GM10248 (cell line): ENCODE measurements at regions of chr4 and their contacts with region 1.

Region 1: GRCh38 chr4:26105815-26106699 is 192.0 kb downstream of the SMIM20 start:
- DNase-seq: no peak
- CTCF ChIP-seq: no peak

Region 2: DNA sequence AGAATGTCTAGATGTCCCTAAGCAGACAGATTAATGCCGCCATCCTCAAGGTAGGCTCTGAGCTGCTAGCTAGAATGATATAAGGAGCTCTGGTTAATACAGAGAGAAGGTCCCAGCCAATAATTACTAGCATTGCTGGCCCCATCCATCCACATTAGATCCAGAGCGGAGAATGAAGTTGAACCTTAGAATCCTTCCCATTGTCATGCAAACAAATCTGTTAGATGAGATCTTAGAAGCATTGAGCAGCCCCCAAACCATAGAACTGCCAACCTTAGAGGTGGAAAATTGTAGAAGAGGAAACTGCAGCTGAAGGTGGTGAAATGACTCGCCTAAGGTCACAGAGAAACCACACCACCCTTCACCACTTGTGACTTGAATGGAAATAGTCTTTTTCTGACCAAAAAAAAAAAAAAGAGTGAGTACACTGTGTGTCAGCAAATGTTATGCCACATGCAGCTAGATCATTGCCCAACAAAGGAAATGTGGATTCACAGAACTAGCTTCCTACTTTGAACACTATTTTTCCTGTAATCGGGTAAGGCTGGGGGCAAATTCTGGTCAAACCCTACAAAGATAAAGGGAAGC is 30.0 kb before region 1 on chr4:
- CTCF ChIA-PET with region 1: interaction called, 7 read pairs
- POLR2A ChIA-PET with region 1: interaction called, 11 read pairs
- DNase-seq: peak; percentile 50
- CTCF ChIP-seq: no peak

Region 3: GRCh38 chr4:26093551-26093950 is 12.5 kb before region 1 on chr4:
- CTCF ChIA-PET with region 1: interaction called, 17 read pairs
- POLR2A ChIA-PET with region 1: no interaction called
- DNase-seq: no peak
- CTCF ChIP-seq: no peak

Region 4: DNA sequence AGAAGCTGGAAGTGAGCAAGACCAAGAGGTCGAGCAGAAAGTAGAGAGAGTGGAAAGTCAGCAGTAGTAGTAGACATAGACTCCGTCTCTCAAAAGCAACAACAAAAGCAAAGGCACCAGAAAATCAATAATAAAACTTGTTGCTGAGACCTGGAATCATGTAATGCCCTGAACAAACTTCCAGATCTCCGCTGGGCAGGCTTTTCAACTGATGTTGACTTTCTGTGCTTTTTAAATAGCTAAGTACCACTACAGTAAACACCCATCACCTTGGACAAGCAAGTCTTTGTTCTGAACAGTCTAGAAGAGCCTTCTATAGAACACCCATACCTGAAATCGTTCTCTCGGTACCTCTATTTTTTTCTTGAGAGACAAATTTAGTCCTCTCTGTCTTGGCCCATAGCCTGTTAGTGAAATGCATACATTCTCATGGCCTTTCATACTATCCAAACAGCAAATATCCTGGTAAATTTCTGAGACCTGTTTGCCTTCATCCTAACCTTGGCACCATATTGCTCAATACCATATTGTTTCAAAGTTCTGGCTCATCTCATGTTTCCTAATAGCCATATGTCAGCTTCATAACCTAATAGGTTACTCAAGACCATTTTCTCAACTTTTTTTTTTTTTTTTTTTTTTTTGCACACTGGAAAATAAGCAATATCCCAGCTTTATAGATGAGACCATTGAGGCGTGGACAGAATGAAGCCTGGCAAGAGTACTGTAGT is 14.2 kb after region 1 on chr4:
- CTCF ChIA-PET with region 1: interaction called, 23 read pairs
- POLR2A ChIA-PET with region 1: no interaction called
- DNase-seq: no peak
- CTCF ChIP-seq: no peak

Region 5: DNA sequence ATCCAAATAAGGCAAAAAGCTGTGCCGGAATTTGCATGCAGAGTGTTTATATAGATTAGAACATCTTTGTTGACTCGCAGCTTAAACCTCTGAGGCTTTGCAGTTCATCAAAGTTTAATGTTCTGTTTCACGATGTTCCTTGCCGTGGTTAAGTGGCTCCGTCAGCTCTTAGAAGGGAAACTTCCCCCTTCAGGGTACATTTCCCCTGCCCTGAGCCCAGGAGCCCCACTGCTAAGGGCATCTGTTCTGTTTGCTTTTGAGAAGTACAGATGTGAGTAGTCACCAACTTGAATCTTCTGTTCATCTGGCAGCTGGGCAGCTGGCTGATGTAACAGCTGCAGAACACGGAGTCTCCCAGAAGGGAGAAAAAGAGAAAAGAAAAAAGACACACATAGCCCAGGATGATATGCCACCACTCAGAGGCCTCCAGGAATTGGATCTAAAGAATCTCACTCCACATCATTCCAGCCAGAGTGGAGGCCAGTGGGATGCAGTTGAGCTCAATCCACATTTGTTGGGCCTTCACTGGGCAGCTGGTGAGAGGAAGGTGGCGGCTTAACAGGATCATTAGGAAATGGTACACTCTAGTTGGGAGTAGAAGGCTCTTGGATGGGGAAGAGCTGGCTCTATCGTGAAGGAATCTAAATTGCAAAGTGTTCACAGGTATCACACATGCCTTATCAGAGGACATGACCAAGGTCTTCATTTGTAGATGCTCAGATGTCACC is 36.0 kb after region 1 on chr4:
- CTCF ChIA-PET with region 1: no interaction called
- POLR2A ChIA-PET with region 1: no interaction called
- DNase-seq: no peak
- CTCF ChIP-seq: no peak